PC-9 (cell line): ENCODE measurements at regions of chr1 and their contacts with region 1.

Region 1: DNA sequence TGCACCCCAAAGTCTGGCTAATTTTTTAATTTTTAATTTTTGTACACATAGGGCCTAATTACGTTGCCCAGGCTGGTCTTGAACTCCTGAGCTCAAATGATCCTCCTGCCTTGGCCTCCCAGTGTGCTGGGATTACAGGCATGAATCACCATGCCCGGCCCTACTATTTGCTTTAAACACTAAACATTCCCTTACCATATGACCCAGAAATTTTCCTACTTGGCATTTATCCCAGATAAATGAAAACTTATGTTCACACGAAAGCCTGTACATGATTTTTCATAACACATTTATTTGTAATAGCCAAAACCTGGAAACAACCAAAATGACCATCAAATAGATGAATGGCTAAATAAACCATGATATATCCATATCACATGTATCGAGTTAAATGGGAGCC is 35.8 kb downstream of the NDUFS5 start:
- DNase-seq: no peak
- H3K4me3 ChIP-seq: no peak overlapping the region
- H3K27ac ChIP-seq: no peak overlapping the region
- H3K4me1 ChIP-seq: no peaks in the 10 kb centered on the region
- H3K27me3 ChIP-seq: no peaks in the 10 kb centered on the region
- CTCF ChIP-seq: no peak

Region 2: DNA sequence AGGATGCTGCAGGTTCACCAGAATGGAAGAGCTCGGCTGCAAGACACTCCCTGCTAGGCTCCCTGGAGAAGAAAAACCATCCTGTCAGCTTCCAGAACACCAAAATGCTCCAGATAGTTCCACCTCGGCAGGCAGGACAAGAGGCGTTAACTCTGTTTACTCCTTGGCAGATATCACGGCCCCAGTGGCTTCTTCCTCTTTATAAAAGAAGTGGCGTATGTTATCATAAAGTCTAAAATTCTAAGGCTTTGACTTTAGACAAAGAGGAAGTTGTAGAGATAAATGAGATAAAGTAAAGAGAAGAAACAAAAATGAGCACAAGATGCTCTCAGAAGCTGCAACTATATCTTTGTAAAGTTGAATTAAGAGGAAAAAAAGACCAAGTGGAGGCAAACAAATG is 1178.3 kb before region 1 on chr1:
- CTCF ChIA-PET with region 1: no interaction called
- POLR2A ChIA-PET with region 1: no interaction called
- intact Hi-C with region 1: loop called (anchors 5 kb)
- DNase-seq: no peak
- H3K4me3 ChIP-seq: no peak overlapping the region
- H3K27ac ChIP-seq: no peak overlapping the region
- H3K4me1 ChIP-seq: no peaks in the 10 kb centered on the region
- H3K27me3 ChIP-seq: no peaks in the 10 kb centered on the region
- CTCF ChIP-seq: no peak

Region 3: DNA sequence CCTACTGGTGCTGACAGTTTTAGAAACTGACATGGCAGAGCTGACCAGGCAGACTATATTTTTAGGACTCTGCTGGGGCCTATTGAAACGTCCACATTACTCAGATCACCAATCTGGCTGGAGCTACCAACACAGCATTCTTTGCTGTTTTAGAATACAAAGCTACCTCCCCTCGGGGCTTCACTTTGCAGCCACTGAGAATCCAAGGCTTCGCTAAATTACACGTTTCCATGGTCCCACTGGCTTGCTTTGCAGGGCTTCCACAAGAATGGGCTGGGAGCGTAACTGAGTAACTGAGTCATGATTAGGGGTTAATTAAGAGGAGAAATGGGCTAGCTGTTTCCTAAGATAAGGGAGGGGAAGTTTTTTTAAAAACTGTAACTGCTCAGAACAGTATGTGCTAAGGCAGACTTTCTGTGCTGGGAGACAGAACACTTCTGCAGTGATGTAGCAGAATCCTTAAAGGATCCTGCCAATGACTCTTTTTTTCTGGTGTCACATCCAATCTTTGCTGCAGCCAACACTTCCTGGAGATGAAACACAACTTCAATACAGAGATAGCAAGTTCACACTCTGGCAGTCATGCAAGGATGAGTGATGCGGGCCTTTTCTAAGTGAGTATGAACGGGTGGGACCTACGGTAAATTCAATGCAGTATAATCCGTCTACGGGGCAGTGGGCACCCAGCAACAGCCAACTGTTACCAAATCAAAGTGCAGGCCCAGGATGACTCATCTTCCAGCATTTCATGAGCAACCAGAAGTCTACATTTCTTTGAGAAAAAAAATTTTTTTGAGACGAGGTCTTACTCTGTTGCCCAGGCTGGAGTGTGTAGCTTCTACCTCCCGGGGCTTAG is 14.3 kb before region 1 on chr1:
- CTCF ChIA-PET with region 1: interaction called, 7 read pairs
- POLR2A ChIA-PET with region 1: interaction called, 22 read pairs
- intact Hi-C with region 1: no loop called
- DNase-seq: peak; percentile 38 to 39
- H3K4me3 ChIP-seq: no peak overlapping the region
- H3K27ac ChIP-seq: no peak overlapping the region
- H3K4me1 ChIP-seq: no peaks in the 10 kb centered on the region
- H3K27me3 ChIP-seq: no peaks in the 10 kb centered on the region
- CTCF ChIP-seq: no peak

Region 4: GRCh38 chr1:39091845-39092645 is 30.1 kb after region 1 on chr1:
- CTCF ChIA-PET with region 1: interaction called, 11 read pairs
- POLR2A ChIA-PET with region 1: no interaction called
- intact Hi-C with region 1: no loop called
- DNase-seq: peak; percentile 70 to 71
- H3K4me3 ChIP-seq: no peak overlapping the region
- H3K27ac ChIP-seq: no peak overlapping the region
- H3K4me1 ChIP-seq: peaks cover 12% of the 10 kb centered on the region
- H3K27me3 ChIP-seq: no peaks in the 10 kb centered on the region
- CTCF ChIP-seq: peak; percentile 84

Region 5: GRCh38 chr1:39391691-39392679 is 330.0 kb after region 1 on chr1:
- CTCF ChIA-PET with region 1: no interaction called
- POLR2A ChIA-PET with region 1: interaction called, 12 read pairs
- intact Hi-C with region 1: no loop called
- DNase-seq: peak; percentile 31 to 72
- H3K4me3 ChIP-seq: peak overlapping the region; percentile 25
- H3K27ac ChIP-seq: peak overlapping the region; percentile 79
- H3K4me1 ChIP-seq: peaks cover 74% of the 10 kb centered on the region
- H3K27me3 ChIP-seq: no peaks in the 10 kb centered on the region
- CTCF ChIP-seq: no peak

Region 6: GRCh38 chr1:40794974-40795715 is 1733.2 kb after region 1 on chr1:
- CTCF ChIA-PET with region 1: interaction called, 11 read pairs
- POLR2A ChIA-PET with region 1: no interaction called
- intact Hi-C with region 1: no loop called
- DNase-seq: no peak
- H3K4me3 ChIP-seq: no peak overlapping the region
- H3K27ac ChIP-seq: no peak overlapping the region
- H3K4me1 ChIP-seq: no peaks in the 10 kb centered on the region
- H3K27me3 ChIP-seq: no peaks in the 10 kb centered on the region
- CTCF ChIP-seq: no peak